ENCODE measurements at regions of chr3 and their contacts with region 1.

Region 1: GRCh38 chr3:186617038-186617946 is 4.4 kb downstream of the AHSG start:
- DNase-seq: peak; percentile 82 to 87
- ATAC-seq: peak; percentile 97

Region 2: GRCh38 chr3:186277268-186277909 is 339.9 kb before region 1 on chr3:
- intact Hi-C with region 1: no loop called
- DNase-seq: no peak
- ATAC-seq: peak; percentile 71

Region 3: DNA sequence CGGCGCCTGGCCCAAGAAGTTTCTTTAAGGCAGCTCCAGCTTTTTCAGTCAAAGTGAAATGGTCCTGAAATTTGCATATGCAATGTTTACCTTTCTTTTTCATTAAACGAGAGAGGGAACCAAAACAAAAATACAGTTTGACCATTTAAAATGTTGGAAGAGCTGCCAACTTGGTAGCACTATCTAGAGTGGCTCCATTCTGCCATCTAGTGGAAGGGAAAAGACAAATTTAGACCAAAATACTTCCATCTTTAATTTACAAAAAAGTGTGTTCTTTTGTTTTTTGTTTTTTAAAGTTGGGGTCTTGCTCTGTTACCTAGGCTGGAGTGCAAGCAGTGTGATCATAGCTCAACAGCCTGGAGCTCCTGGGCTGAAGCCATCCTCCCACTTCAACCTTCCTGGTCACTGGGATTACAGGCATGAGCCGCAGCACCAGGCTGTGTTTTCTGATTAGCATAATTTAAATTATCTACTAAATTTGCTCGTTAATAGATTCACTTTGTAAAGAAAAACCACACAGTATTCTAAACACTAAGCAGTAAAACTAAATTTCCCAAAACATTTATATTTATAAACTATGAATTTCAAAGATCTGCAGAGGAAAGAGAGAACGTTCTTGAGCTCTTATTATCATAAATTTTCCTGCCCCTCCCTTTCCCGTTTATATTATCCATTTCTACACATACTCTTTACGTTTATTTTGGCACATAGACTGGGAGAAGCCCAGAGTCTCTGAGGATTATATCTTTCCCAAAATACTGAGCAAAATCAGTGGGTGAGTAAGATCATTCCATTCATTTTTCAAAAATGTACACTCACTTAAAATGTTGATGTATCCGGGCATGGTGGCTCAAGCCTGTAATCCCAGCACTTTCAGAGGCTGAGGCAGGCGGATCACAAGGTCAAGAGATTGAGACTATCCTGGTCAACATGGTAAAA is 204.4 kb after region 1 on chr3:
- intact Hi-C with region 1: loop called (anchors 5 to 10 kb)
- DNase-seq: no peak
- ATAC-seq: peak; percentile 42

Region 4: DNA sequence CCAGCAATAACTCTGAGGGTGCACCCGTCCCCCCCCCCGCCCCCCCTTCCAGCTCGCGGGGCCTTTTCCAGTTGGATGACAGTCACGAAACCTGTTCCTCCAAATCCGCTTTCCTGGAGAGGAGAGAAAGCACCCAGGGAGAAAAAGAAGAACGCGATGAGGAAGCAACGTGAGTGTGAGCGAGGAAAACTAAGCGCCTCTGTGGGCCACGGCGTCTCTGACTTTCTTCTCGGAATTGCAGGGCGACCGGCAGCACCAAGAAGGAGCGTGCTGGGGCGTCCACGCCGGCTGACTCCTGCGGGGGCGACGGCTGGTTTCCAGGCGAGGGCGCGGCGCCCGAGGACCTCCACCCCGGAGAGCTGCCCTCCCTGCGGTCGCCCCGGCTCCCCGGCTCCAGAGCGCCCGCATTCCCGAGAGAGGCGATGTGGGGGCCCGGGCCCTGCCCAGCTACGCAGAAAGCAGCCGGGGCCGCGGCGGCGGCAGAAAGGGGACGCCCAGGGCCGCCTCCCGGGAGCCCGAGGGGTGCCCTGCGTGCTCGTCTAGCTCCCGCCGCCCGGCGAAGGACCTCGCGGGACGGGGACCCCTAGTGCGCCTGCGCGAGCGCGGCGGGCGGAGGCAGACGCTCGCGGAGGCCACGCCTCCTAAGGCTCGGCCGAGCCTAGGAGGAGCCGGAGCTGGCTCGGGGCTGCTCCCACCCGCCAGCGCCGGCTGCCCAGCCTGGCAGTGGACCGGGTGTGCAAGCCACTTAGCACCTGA is 209.9 kb after region 1 on chr3:
- intact Hi-C with region 1: loop called (anchors 5 to 10 kb)
- DNase-seq: peak; percentile 67 to 84
- ATAC-seq: peak; percentile 97

Region 5: DNA sequence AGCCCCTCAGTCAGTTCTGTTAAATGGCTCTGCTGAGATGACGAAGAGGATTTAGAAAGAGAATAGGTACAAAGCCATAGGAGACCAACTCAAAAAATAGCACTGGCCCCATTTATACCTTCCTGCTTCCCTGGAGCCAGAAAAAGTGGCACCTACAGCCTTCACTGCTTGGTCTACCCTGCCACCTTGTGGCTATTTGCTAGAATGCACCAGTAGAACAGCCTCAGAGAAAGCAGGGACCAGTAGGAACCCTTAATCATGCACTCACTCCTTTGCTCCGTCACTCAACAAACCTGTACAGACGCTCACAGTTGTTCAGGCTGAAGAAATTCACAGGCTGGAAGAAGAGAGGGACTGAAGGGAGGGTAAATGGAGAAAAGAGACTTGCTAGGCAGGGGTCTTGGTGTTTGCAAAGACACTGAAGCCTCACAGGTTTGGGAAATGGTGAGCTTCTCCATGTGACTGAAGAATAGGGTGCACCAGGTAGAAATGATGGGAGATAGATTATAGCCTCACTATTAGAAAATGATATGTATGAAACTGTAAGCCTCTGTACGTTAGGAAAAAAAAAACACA is 1097.2 kb after region 1 on chr3:
- intact Hi-C with region 1: loop called in 1 of 2 experiments (anchors 10 kb)
- DNase-seq: peak in 1 of 2 donors; percentile 73
- ATAC-seq: peak; percentile 94

Measured in left colon (tissue), 2 donors.